ENCODE measurements at regions of chr3 and their contacts with region 1.

Region 1: DNA sequence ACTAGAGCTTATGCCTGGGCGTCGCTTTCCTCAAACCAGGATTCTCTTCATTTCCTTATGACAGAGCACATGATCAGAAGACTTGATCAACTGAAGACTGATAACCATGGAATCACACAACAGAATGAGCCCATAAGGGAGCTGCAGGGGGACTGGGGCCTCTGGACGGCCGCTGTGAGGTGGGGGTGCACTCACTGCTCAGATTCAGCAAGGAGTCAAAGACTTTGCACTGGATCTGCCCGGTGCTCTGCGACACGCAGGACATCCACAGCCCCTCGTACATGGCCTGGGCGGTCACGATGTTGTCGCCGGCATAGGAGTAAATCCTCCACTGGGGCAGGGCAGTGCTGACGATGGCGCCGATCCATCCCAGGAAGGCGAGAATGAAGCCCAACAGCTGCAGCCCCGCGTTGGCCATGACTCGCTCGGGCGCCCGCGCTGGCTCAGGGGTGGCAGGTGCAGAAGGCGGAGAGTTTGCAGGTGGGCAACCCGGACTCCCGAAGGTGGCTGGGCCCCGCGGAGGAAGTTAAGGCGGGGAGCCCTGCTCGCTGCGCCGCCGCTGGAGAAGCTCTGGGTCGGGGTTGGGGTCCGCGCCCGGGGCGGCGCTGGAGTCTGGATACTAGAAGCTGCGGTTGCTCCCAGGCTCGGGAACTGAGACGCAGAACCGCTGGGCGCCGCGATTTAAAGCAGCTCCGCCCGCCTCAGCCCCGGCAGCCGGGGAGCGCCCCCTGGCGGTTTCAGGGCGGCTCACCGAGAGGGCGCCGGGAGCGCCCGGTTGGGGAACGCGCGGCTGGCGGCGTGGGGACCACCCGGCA is at the start of gene CLDN1:
- DNase-seq: peak; percentile 64 to 90
- H3K4me3 ChIP-seq: peak within 1 kb of the TSS; percentile 85
- H3K27ac ChIP-seq: peak within 1 kb of the TSS; percentile 62
- H3K4me1 ChIP-seq: peaks cover 39% of the 10 kb centered on the region
- H3K27me3 ChIP-seq: no peaks in the 10 kb centered on the region
- CTCF ChIP-seq: peak; percentile 98
- total RNA-seq, gene CLDN1: 25.9 and 27.1 TPM in 2 replicates

Region 2: GRCh38 chr3:189967254-189967865 is 354.6 kb before region 1 on chr3:
- CTCF ChIA-PET with region 1: no interaction called
- POLR2A ChIA-PET with region 1: no interaction called
- intact Hi-C with region 1: loop called (anchors 2 kb)
- DNase-seq: peak; percentile 37 to 59
- H3K4me3 ChIP-seq: no peak overlapping the region
- H3K27ac ChIP-seq: no peak overlapping the region
- H3K4me1 ChIP-seq: no peaks in the 10 kb centered on the region
- H3K27me3 ChIP-seq: no peaks in the 10 kb centered on the region
- CTCF ChIP-seq: peak; percentile 98

Region 3: GRCh38 chr3:190120269-190121060 is 201.5 kb before region 1 on chr3 and contains the start of gene P3H2:
- CTCF ChIA-PET with region 1: no interaction called
- POLR2A ChIA-PET with region 1: interaction called, 3 read pairs
- intact Hi-C with region 1: loop called (anchors 5 kb)
- DNase-seq: peak; percentile 84 to 91
- H3K4me3 ChIP-seq: peak within 1 kb of the TSS; percentile 90
- H3K27ac ChIP-seq: no peak within 1 kb of the TSS
- H3K4me1 ChIP-seq: peaks cover 42% of the 10 kb centered on the region
- H3K27me3 ChIP-seq: no peaks in the 10 kb centered on the region
- CTCF ChIP-seq: peak; percentile 55; the same call in 1 of the 2 replicates
- total RNA-seq, gene P3H2: 20.9 and 26.2 TPM in 2 replicates

Region 4: GRCh38 chr3:190224863-190225692 is 96.9 kb before region 1 on chr3:
- CTCF ChIA-PET with region 1: interaction called, 20 read pairs
- POLR2A ChIA-PET with region 1: interaction called, 3 read pairs
- intact Hi-C with region 1: loop called (anchors 1 kb)
- DNase-seq: peak in 1 of 2 experiments; percentile 12
- H3K4me3 ChIP-seq: no peak overlapping the region
- H3K27ac ChIP-seq: no peak overlapping the region
- H3K4me1 ChIP-seq: peaks cover 12% of the 10 kb centered on the region
- H3K27me3 ChIP-seq: no peaks in the 10 kb centered on the region
- CTCF ChIP-seq: peak; percentile 74

Region 5: DNA sequence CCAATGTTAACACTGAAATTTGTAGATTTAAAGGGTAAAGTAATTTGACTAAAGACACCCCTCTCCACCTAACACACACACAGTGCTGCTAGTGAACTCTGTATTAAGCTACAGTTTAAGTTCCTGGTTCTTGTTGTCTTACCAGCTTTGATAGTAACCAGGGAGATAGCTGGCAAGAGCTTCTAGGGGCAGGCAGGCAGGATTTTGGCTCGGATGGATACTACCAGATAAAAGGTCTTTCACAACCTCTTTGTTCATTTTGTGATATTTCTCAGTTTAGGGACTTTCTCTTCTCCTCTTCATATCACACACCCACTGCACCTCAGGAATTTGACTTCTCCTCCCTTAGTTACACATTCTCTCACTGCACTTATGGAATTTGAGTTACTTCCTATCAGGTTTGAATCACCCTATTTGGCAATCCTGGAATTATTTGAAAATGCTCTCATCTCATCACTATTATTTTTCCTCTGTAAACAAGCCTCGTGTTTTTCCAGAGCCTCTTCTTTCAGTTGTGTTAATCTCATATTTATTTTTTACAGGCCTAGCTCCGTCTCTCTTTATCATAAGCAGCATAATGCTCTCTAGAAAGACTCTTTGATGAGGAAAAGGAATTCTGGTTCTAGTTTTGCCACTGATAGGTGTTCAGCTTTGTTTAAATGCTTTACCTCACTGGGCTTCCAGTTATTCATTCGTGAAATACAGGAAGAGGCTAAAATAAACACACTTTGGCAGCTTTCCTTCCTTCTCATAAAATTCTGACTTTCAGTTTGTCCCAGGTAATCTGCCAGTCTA is 23.2 kb after region 1 on chr3:
- CTCF ChIA-PET with region 1: interaction called, 3 read pairs
- POLR2A ChIA-PET with region 1: interaction called, 15 read pairs
- intact Hi-C with region 1: loop called (anchors 2 kb)
- DNase-seq: peak; percentile 79 to 100
- H3K4me3 ChIP-seq: peak overlapping the region; percentile 50; the same call in 1 of the 2 replicates
- H3K27ac ChIP-seq: peak overlapping the region; percentile 98
- H3K4me1 ChIP-seq: peaks cover 40% of the 10 kb centered on the region
- H3K27me3 ChIP-seq: no peaks in the 10 kb centered on the region
- CTCF ChIP-seq: no peak

Region 6: DNA sequence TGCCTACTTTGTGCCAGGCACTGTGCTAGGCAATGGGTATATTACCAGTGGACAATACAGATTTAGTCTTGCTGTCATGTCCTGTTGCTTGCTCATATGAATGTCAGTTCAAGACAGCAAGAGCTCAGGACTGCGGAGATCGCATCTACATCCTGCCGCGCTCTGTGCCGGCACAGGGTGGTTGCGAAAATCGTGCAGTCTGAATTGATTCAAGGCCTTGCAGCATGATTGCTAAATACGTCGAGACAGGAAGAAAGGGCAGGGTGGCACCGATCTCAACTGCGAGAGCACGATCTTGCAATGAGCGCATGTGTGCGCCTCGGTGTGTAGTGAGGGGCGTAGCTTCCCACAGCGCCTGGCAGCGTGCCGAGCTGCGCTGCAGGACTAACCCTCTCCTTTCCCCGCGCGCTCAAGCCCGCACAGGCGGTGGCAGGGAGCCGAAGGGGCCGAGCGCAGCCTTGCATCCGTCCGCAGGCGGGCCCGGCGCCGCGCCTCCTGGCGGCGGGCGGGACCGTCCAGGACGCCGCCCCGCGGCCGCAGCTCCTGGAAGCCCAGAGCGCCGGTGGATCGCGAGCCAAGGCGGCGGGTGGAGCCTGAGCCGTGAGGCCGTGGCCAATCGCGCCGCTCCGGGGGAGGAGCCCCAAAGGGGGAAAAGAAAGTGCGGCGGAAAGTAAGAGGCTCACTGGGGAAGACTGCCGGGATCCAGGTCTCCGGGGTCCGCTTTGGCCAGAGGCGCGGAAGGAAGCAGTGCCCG is 191.6 kb after region 1 on chr3 and contains the start of gene IL1RAP:
- CTCF ChIA-PET with region 1: no interaction called
- POLR2A ChIA-PET with region 1: no interaction called
- intact Hi-C with region 1: loop called (anchors 10 kb)
- DNase-seq: peak; percentile 88 to 96
- H3K4me3 ChIP-seq: peak within 1 kb of the TSS; percentile 80
- H3K27ac ChIP-seq: peak within 1 kb of the TSS; percentile 41
- H3K4me1 ChIP-seq: peaks cover 27% of the 10 kb centered on the region
- H3K27me3 ChIP-seq: no peaks in the 10 kb centered on the region
- CTCF ChIP-seq: no peak; the same call in none of the 2 replicates
- total RNA-seq, gene IL1RAP: 8.4 and 13.3 TPM in 2 replicates